ENCODE measurements at regions of chr12 and their contacts with region 1.

Region 1: DNA sequence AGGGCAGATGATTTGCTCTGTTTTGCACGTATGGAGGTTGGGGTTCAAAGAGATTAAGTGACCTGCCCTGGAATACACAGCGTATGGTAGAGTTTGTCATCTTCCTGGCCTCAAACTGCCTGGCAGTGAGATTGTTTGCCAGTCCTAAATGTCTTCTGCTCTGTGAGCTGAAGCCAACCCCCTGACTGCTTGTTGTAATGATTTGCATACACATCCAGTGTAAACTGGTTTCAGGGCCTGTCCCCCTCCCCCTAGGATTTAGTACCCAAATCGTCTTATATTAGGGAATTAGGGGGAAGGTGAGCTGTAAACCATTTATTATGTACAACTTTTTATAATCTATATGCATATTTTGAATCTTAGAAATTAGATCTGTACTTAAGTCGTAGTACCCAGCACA is 38.4 kb downstream of the AKAP3 start:
- DNase-seq: no peak

Region 2: DNA sequence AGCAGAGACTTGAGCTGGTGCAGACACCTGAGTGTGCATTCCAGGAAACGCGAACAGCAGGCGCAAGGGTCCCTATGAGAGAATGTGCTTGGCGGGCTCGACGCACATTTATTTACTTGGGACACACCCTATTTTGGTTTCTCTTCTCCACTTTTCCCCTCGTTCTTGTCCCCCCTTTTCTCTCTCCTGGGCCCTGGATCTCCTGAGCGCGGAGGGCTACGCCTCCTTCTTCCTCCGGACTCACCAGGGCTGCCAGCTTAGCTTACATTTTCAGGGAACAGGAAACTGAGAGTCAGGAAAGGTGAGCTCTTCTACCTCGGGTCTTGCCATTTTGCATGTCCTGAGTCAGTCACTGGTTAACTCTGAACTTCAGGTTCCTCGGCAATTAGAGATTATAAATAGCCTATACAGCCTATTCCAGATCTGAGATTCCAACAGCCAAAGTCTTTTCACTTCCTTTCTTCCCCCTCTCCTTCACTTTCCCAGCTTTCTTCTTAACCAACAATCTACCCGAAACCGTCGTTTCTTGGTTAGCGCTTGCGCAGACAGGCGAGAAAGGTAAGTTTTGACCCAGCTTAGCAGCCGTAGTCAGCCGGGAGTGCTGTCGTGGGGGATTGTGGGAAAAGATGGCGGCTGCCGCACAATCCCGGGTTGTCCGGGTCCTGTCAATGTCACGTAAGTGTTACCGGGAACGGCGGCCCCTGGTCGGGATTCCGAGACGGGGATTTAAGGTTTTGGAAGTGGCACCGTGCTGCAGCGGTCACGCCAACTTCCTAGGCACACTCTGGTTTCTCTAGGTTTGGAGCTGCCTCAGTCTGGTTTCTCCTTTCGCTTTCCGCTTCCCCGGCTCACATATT is 38.2 kb after region 1 on chr12 and contains the starts of genes AKAP3 and NDUFA9:
- intact Hi-C with region 1: loop called (anchors 5 kb)
- DNase-seq: peak; percentile 75 to 95 (median 86)

Region 3: GRCh38 chr12:4723226-4723625 is 112.7 kb after region 1 on chr12:
- intact Hi-C with region 1: no loop called
- DNase-seq: no peak

Measured in head of caudate nucleus (tissue), 42 donors.